ENCODE measurements at regions of chr2 and their contacts with region 1.

Region 1: GRCh38 chr2:43226558-43226954 is at the start of gene ZFP36L2:
- DNase-seq: peak; percentile 99
- H3K4me3 ChIP-seq: peak within 1 kb of the TSS; percentile 95 to 97
- H3K27ac ChIP-seq: peak within 1 kb of the TSS; percentile 94 to 95
- H3K4me1 ChIP-seq: peaks cover 19 to 53% of the 10 kb centered on the region in 2 experiments
- H3K27me3 ChIP-seq: no peaks in the 10 kb centered on the region
- CTCF ChIP-seq: no peak
- EP300 ChIP-seq: 0 out of 4 replicates have a peak, but pooled peaks of 1 of the 2 experiments have one; percentile 3
- RAD21 ChIP-seq: no peak
- polyA plus RNA-seq, gene ZFP36L2: 12.5 and 18.4 TPM in 2 replicates

Region 2: GRCh38 chr2:42828487-42829425 is 397.8 kb before region 1 on chr2:
- CTCF ChIA-PET with region 1: interaction called, 42 read pairs
- POLR2A ChIA-PET with region 1: no interaction called
- DNase-seq: peak; percentile 92
- H3K4me3 ChIP-seq: no peak overlapping the region; a peak in 1 of 4 replicates
- H3K27ac ChIP-seq: no peak overlapping the region
- H3K4me1 ChIP-seq: peaks cover 0 to 12% of the 10 kb centered on the region in 2 experiments; a peak in 1 of 4 replicates
- H3K27me3 ChIP-seq: no peaks in the 10 kb centered on the region
- CTCF ChIP-seq: peak; percentile 99
- EP300 ChIP-seq: no peak
- RAD21 ChIP-seq: peak; percentile 96

Region 3: DNA sequence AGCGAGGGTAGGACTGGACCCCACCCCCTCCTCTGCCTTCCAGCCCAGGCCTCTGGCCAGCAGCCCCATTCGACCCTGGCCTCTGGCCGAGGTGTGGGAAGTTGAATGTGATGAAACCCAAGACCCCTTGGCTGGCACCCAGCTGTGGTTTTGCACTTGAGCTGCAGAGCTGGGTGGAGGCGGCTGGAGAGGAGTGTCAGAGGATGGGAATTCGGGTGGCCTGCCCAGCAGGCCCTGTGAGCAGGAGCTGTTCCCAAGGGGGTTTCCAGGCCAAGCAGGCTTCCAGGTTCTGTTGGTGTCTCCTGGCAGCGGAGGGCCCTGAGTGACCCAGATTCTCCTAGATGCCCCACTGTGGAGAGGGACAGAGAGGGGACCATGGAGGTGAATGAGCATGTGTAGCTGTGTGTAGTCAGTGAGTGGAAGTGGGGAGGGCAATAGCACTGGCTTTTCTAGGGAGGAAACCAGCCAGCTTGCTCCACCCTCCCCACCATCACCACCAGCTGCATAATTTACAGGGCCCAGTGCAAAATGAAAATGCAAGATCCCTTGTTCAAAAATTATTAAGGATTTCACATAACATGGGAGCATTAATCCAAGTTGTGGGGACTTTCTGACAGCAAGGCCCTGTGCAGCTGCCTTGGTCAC is 262.0 kb before region 1 on chr2:
- CTCF ChIA-PET with region 1: interaction called, 299 read pairs
- POLR2A ChIA-PET with region 1: interaction called, 4 read pairs
- DNase-seq: no peak
- H3K4me3 ChIP-seq: no peak overlapping the region
- H3K27ac ChIP-seq: peak overlapping the region; percentile 43 to 85; a peak in 3 of 4 replicates
- H3K4me1 ChIP-seq: peaks cover 38 to 41% of the 10 kb centered on the region in 2 experiments; a peak in 3 of 4 replicates
- H3K27me3 ChIP-seq: no peaks in the 10 kb centered on the region
- CTCF ChIP-seq: no peak
- EP300 ChIP-seq: peak in 1 of 2 experiments; percentile 94; a peak in 2 of 4 replicates
- RAD21 ChIP-seq: no peak

Region 4: DNA sequence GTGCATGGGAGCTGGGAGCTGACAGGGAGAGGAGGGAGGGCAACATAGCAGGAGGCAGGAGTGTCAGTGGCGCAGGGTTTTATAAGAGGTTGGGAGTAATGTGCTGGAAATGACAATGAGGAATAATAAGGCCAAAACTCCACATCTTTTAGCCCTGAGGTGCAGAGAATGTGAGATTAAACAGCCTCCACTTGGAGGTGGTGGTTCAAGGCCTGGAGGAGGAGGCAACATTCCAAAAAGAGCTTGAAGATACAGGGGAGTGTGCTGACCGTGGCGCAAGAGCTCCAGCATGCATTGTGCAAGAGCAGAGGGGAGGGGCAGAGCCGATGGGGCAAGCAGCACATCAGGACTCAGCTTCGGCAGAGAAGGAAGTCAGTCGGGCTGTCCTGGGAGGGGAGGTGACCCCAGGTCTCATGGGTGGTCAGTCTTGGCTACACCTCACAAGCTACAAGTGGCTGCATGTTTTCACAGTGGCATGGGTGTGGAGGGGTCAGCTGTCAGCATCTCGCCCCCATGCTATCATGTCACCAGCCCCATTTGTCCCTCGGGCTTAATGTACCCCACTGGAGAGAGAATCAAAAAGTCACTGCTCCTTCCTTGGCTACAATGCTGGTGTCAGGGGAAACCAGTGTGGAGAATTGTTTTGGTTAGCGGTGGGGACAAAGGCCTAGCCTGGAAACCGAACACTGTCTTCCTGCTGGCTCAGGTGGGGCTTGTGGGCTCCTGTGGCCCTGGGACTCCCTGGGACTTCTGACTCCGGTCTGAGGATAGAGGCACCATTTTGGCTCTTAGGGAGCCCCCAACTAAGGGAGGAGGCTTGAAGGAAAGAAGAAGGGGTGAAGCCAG is 208.2 kb before region 1 on chr2:
- CTCF ChIA-PET with region 1: interaction called, 106 read pairs
- POLR2A ChIA-PET with region 1: interaction called, 9 read pairs
- DNase-seq: no peak
- H3K4me3 ChIP-seq: no peak overlapping the region
- H3K27ac ChIP-seq: no peak overlapping the region
- H3K4me1 ChIP-seq: no peaks in the 10 kb centered on the region; a peak in 1 of 4 replicates
- H3K27me3 ChIP-seq: no peaks in the 10 kb centered on the region
- CTCF ChIP-seq: no peak
- EP300 ChIP-seq: no peak
- RAD21 ChIP-seq: no peak

Region 5: GRCh38 chr2:43131024-43131889 is 95.3 kb before region 1 on chr2:
- CTCF ChIA-PET with region 1: interaction called, 16 read pairs
- POLR2A ChIA-PET with region 1: interaction called, 3 read pairs
- DNase-seq: peak; percentile 73
- H3K4me3 ChIP-seq: no peak overlapping the region
- H3K27ac ChIP-seq: no peak overlapping the region
- H3K4me1 ChIP-seq: peaks cover 11 to 19% of the 10 kb centered on the region in 2 experiments; a peak in 2 of 4 replicates
- H3K27me3 ChIP-seq: no peaks in the 10 kb centered on the region
- CTCF ChIP-seq: peak; percentile 47
- EP300 ChIP-seq: no peak; a peak in 1 of 4 replicates
- RAD21 ChIP-seq: peak; percentile 76

Region 6: GRCh38 chr2:43269074-43269572 is 42.6 kb after region 1 on chr2:
- CTCF ChIA-PET with region 1: interaction called, 61 read pairs
- POLR2A ChIA-PET with region 1: interaction called, 24 read pairs
- DNase-seq: peak; percentile 77
- H3K4me3 ChIP-seq: no peak overlapping the region
- H3K27ac ChIP-seq: peak overlapping the region; percentile 54 to 99
- H3K4me1 ChIP-seq: peaks cover 31 to 73% of the 10 kb centered on the region in 2 experiments
- H3K27me3 ChIP-seq: no peaks in the 10 kb centered on the region
- CTCF ChIP-seq: peak; percentile 38; the same call in 1 of the 2 replicates
- EP300 ChIP-seq: peak; percentile 60 to 73; a peak in 2 of 4 replicates
- RAD21 ChIP-seq: peak; percentile 47

Region 7: GRCh38 chr2:43343573-43344304 is 117.2 kb after region 1 on chr2:
- CTCF ChIA-PET with region 1: interaction called, 10 read pairs
- POLR2A ChIA-PET with region 1: interaction called, 19 read pairs
- DNase-seq: no peak
- H3K4me3 ChIP-seq: no peak overlapping the region
- H3K27ac ChIP-seq: peak overlapping the region; percentile 76 to 100
- H3K4me1 ChIP-seq: peaks cover 45 to 75% of the 10 kb centered on the region in 2 experiments
- H3K27me3 ChIP-seq: no peaks in the 10 kb centered on the region
- CTCF ChIP-seq: no peak
- EP300 ChIP-seq: peak; percentile 11 to 50; a peak in 2 of 4 replicates
- RAD21 ChIP-seq: no peak; the same call in 1 of the 2 replicates

Region 8: GRCh38 chr2:43745457-43745856 is 518.9 kb after region 1 on chr2:
- CTCF ChIA-PET with region 1: no interaction called
- POLR2A ChIA-PET with region 1: no interaction called
- DNase-seq: no peak
- H3K4me3 ChIP-seq: no peak overlapping the region
- H3K27ac ChIP-seq: peak overlapping the region; percentile 55 to 66; a peak in 3 of 4 replicates
- H3K4me1 ChIP-seq: peaks cover 0 to 11% of the 10 kb centered on the region in 2 experiments; a peak in 1 of 4 replicates
- H3K27me3 ChIP-seq: no peaks in the 10 kb centered on the region
- CTCF ChIP-seq: no peak
- EP300 ChIP-seq: peak in 1 of 2 experiments; percentile 47; a peak in 1 of 4 replicates
- RAD21 ChIP-seq: no peak

Measured in SK-N-SH (cell line).